T-cell (primary cell): ENCODE measurements at regions of chr16 and their contacts with region 1.

Region 1: GRCh38 chr16:58336332-58337089 is 41.7 kb upstream of the PRSS54 start:
- DNase-seq: peak; percentile 50 to 86 (median 76)
- ATAC-seq: peak; percentile 82 to 93 (median 86)
- H3K4me3 ChIP-seq: no peak overlapping the region
- H3K4me3 Mint-ChIP-seq: peak overlapping the region; percentile 55 to 62 (median 61)
- H3K27ac ChIP-seq: no peak overlapping the region
- H3K27ac Mint-ChIP-seq: no peak overlapping the region
- H3K4me1 ChIP-seq: peaks cover 0 to 7% of the 10 kb centered on the region in 2 experiments
- H3K4me1 Mint-ChIP-seq: peaks cover 6 to 7% (median 7%) of the 10 kb centered on the region in 3 donors
- H3K27me3 ChIP-seq: peaks cover 0 to 11% of the 10 kb centered on the region in 2 experiments
- H3K27me3 Mint-ChIP-seq: peaks cover 5 to 8% of the 10 kb centered on the region in 2 donors

Region 2: DNA sequence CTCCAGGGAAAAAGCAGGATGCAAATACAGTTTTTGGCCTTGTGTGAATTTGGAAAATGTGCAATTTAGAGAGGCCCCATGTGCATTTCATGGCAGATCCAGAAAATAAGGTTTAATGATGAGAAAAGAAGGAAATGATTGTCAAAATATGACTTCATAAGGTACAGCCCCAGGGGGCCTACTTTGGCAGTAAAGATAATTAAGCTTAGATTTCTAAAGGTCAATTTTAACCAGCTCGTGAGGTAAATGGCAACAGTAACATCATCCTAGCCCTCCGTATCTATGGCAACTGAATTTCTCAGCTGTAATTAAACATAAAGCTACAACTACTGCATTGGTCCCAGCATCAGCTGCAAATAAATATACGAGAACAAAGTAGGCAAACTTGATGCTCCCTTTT is 11.7 kb before region 1 on chr16:
- CTCF ChIA-PET with region 1: interaction called, 4 to 11 read pairs
- POLR2A ChIA-PET with region 1: no interaction called
- DNase-seq: no peak
- ATAC-seq: no peak
- H3K4me3 ChIP-seq: no peak overlapping the region
- H3K4me3 Mint-ChIP-seq: no peak overlapping the region
- H3K27ac ChIP-seq: no peak overlapping the region
- H3K27ac Mint-ChIP-seq: no peak overlapping the region
- H3K4me1 ChIP-seq: no peaks in the 10 kb centered on the region
- H3K4me1 Mint-ChIP-seq: no peaks in the 10 kb centered on the region
- H3K27me3 ChIP-seq: peaks cover 0 to 9% of the 10 kb centered on the region in 2 experiments
- H3K27me3 Mint-ChIP-seq: peaks cover 23 to 26% of the 10 kb centered on the region in 2 donors

Region 3: GRCh38 chr16:58487566-58488351 is 151.2 kb after region 1 on chr16:
- CTCF ChIA-PET with region 1: interaction called, 12 to 47 read pairs
- POLR2A ChIA-PET with region 1: interaction called in 1 of 2 experiments, 3 read pairs
- DNase-seq: peak; percentile 14 to 84 (median 63)
- ATAC-seq: peak; percentile 79 to 83 (median 82)
- H3K4me3 ChIP-seq: no peak overlapping the region
- H3K4me3 Mint-ChIP-seq: peak overlapping the region in 1 of 3 donors; percentile 16
- H3K27ac ChIP-seq: no peak overlapping the region
- H3K27ac Mint-ChIP-seq: no peak overlapping the region
- H3K4me1 ChIP-seq: peaks cover 0 to 7% of the 10 kb centered on the region in 2 experiments
- H3K4me1 Mint-ChIP-seq: peaks cover 0 to 3% (median 0%) of the 10 kb centered on the region in 3 donors
- H3K27me3 ChIP-seq: peaks cover 0 to 27% of the 10 kb centered on the region in 2 experiments
- H3K27me3 Mint-ChIP-seq: peaks cover 4 to 6% of the 10 kb centered on the region in 2 donors